Activated naive CD4-positive, alpha-beta T cell treated with anti-CD3 and anti-CD28 coated beads for 36 hours (primary cell): ENCODE measurements at regions of chr17 and their contacts with region 1.

Region 1: GRCh38 chr17:56891784-56892183 is 22.1 kb downstream of the TRIM25 start:
- DNase-seq: peak; percentile 59
- H3K4me3 Mint-ChIP-seq: no peak overlapping the region
- H3K27ac Mint-ChIP-seq: no peak overlapping the region
- H3K4me1 Mint-ChIP-seq: no peaks in the 10 kb centered on the region
- H3K27me3 Mint-ChIP-seq: no peaks in the 10 kb centered on the region

Region 2: DNA sequence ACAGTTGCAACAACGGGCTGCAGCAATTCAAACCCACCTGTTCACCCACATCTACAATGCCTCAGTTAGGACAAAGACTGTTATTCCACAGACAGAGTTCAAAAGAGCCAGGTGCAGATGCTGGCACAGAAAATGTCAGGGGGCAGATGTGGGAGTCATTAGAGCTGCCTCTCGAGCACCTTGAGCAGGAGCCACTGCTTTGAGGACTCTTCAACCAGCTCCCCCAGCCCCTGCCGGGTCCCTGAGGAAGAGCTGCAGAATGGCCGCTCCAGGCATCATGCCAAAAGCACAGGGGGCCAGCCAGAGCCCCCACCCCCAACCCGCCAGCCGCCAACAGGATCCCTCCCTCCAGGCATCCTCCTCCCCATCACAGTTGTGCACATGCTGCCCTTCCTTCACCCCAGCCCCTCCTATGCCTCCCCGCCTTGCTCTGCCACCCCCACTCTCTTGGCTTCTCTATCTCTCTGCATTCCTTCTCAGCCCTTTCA is 78.8 kb before region 1 on chr17:
- CTCF ChIA-PET with region 1: no interaction called
- intact Hi-C with region 1: no loop called
- DNase-seq: no peak
- H3K4me3 Mint-ChIP-seq: no peak overlapping the region
- H3K27ac Mint-ChIP-seq: no peak overlapping the region
- H3K4me1 Mint-ChIP-seq: no peaks in the 10 kb centered on the region
- H3K27me3 Mint-ChIP-seq: no peaks in the 10 kb centered on the region

Region 3: GRCh38 chr17:56913864-56914640 is 22.3 kb after region 1 on chr17 and contains the start of gene TRIM25:
- CTCF ChIA-PET with region 1: interaction called, 5 read pairs
- intact Hi-C with region 1: loop called (anchors 2 kb)
- DNase-seq: peak; percentile 94
- H3K4me3 Mint-ChIP-seq: peak within 1 kb of the TSS; percentile 83
- H3K27ac Mint-ChIP-seq: peak within 1 kb of the TSS; percentile 98
- H3K4me1 Mint-ChIP-seq: peaks cover 50% of the 10 kb centered on the region
- H3K27me3 Mint-ChIP-seq: no peaks in the 10 kb centered on the region
- total RNA-seq, gene TRIM25: 157 to 161 TPM

Region 4: GRCh38 chr17:56977673-56978395 is 86.0 kb after region 1 on chr17 and contains the start of gene SCPEP1:
- CTCF ChIA-PET with region 1: no interaction called
- intact Hi-C with region 1: no loop called
- DNase-seq: peak; percentile 85
- H3K4me3 Mint-ChIP-seq: peak within 1 kb of the TSS; percentile 90
- H3K27ac Mint-ChIP-seq: peak within 1 kb of the TSS; percentile 39
- H3K4me1 Mint-ChIP-seq: peaks cover 19% of the 10 kb centered on the region
- H3K27me3 Mint-ChIP-seq: peaks cover 3% of the 10 kb centered on the region
- total RNA-seq, gene SCPEP1: 11.7 to 15.3 TPM